CD4-positive, alpha-beta memory T cell (primary cell): ENCODE measurements at regions of chr12 and their contacts with region 1.

Region 1: GRCh38 chr12:117212563-117213190 is 22.4 kb upstream of the FBXO21 start:
- DNase-seq: peak; percentile 36 to 48 (median 43)
- H3K4me3 ChIP-seq: no peak overlapping the region
- H3K4me3 Mint-ChIP-seq: no peak overlapping the region
- H3K27ac ChIP-seq: no peak overlapping the region
- H3K27ac Mint-ChIP-seq: no peak overlapping the region
- H3K4me1 ChIP-seq: no peaks in the 10 kb centered on the region
- H3K4me1 Mint-ChIP-seq: no peaks in the 10 kb centered on the region
- H3K27me3 ChIP-seq: no peaks in the 10 kb centered on the region
- H3K27me3 Mint-ChIP-seq: peaks cover 12 to 19% of the 10 kb centered on the region in 2 donors

Region 2: DNA sequence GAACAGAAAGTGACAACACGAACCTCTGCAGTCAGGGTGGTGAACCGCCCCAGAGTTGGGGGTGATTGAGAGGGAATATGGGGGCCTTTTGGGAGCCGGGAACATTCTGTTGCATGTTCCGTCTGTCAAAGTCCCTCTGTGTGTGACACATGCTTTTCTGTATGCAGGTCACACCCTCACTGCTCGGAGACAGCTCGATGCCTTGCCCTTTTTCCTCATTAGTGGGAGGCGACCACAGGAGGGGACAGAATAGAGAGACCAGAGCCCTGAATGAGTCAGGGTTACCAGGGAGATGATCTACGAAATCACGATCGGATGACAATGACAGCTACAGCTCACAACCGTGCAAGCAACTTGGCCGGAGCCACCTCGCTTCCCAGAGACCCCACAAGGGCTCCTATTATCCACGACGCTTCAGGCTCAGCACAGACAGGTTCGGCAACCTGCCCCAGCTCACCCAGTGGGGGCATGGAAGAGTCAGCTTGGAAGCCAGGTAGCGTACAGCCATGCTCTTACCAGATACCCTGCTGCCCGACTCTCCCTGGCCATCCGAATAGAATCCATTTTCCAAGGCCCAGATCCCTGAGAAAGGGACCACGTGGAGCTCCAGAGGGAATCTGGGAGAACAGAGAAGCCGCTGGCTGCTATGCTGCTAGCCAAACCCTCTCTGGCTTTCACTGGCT is 152.3 kb before region 1 on chr12:
- CTCF ChIA-PET with region 1: no interaction called
- POLR2A ChIA-PET with region 1: no interaction called
- intact Hi-C with region 1: no loop called
- DNase-seq: no peak
- H3K4me3 ChIP-seq: no peak overlapping the region
- H3K4me3 Mint-ChIP-seq: no peak overlapping the region
- H3K27ac ChIP-seq: no peak overlapping the region
- H3K27ac Mint-ChIP-seq: peak overlapping the region in 2 of 7 donors; percentile 28 to 38
- H3K4me1 ChIP-seq: peaks cover 27% of the 10 kb centered on the region
- H3K4me1 Mint-ChIP-seq: peaks cover 19 to 51% (median 32%) of the 10 kb centered on the region in 4 donors
- H3K27me3 ChIP-seq: no peaks in the 10 kb centered on the region
- H3K27me3 Mint-ChIP-seq: no peaks in the 10 kb centered on the region

Region 3: GRCh38 chr12:117202033-117202432 is 10.6 kb before region 1 on chr12:
- CTCF ChIA-PET with region 1: interaction called, 15 read pairs
- POLR2A ChIA-PET with region 1: no interaction called
- intact Hi-C with region 1: no loop called
- DNase-seq: no peak
- H3K4me3 ChIP-seq: no peak overlapping the region
- H3K4me3 Mint-ChIP-seq: no peak overlapping the region
- H3K27ac ChIP-seq: no peak overlapping the region
- H3K27ac Mint-ChIP-seq: no peak overlapping the region
- H3K4me1 ChIP-seq: no peaks in the 10 kb centered on the region
- H3K4me1 Mint-ChIP-seq: no peaks in the 10 kb centered on the region
- H3K27me3 ChIP-seq: no peaks in the 10 kb centered on the region
- H3K27me3 Mint-ChIP-seq: peaks cover 14% of the 10 kb centered on the region in 2 donors

Region 4: DNA sequence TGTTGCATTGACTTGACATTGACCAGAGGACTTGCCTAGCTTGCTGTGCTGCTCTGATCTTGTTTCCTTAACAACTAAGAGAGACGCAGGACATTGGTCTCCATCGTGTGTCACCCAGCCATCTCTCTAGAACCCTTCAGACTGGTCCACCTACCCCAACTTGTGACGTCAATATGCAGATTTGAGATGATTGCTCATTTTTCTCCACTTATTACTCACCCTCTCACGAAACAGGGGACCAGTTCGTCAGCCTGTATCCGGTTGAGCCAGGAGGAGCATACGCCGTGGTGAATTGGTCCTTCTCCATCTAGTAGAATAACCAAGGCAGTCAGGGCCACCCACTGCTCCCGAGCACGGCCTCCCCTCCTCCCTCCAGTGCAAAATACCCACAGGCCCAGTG is 13.8 kb after region 1 on chr12:
- CTCF ChIA-PET with region 1: interaction called, 14 read pairs
- POLR2A ChIA-PET with region 1: no interaction called
- intact Hi-C with region 1: no loop called
- DNase-seq: no peak
- H3K4me3 ChIP-seq: no peak overlapping the region
- H3K4me3 Mint-ChIP-seq: no peak overlapping the region
- H3K27ac ChIP-seq: no peak overlapping the region
- H3K27ac Mint-ChIP-seq: no peak overlapping the region
- H3K4me1 ChIP-seq: no peaks in the 10 kb centered on the region
- H3K4me1 Mint-ChIP-seq: no peaks in the 10 kb centered on the region
- H3K27me3 ChIP-seq: no peaks in the 10 kb centered on the region
- H3K27me3 Mint-ChIP-seq: peaks cover 7 to 20% of the 10 kb centered on the region in 2 donors

Region 5: DNA sequence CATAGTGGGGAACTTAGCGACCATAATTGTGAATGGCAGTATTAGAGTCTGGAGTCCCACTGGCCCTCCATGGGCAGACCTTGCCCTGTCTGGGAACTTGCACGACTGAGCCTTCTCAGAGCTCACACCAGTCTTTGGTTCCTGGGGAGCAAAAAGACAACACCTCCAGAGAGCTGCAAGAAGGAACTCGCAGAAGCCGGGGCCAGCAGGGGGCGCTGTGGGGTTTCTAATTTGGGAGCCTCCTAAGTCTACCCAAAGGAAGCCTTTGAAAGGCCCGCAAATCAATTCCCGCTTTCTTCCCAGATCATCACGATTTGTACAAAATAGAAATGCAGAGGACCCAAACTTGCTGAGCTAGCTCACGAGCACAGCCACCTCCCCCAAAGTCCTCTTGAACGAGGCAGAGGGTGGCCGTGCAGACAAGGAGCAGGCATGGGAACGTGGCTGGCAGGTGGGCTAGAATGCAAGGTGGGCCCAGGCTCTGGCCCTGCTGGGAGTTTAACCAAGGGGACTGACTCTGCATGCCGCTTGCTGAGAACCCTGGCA is 23.9 kb after region 1 on chr12:
- CTCF ChIA-PET with region 1: interaction called, 11 read pairs
- POLR2A ChIA-PET with region 1: no interaction called
- intact Hi-C with region 1: no loop called
- DNase-seq: peak; percentile 39 to 56 (median 43)
- H3K4me3 ChIP-seq: no peak overlapping the region
- H3K4me3 Mint-ChIP-seq: peak overlapping the region in 1 of 8 donors; percentile 29
- H3K27ac ChIP-seq: no peak overlapping the region
- H3K27ac Mint-ChIP-seq: no peak overlapping the region
- H3K4me1 ChIP-seq: no peaks in the 10 kb centered on the region
- H3K4me1 Mint-ChIP-seq: peaks cover 0 to 4% (median 0%) of the 10 kb centered on the region in 4 donors
- H3K27me3 ChIP-seq: no peaks in the 10 kb centered on the region
- H3K27me3 Mint-ChIP-seq: peaks cover 10 to 12% of the 10 kb centered on the region in 2 donors